GM12878 (cell line): ENCODE measurements at regions of chr18 and their contacts with region 1.

Region 1: GRCh38 chr18:35688757-35689156 is 107.2 kb downstream of the GALNT1 start:
- DNase-seq: peak; percentile 35
- ATAC-seq: peak; percentile 94
- H3K4me3 ChIP-seq: no peak overlapping the region
- H3K27ac ChIP-seq: peak overlapping the region; percentile 7
- H3K4me1 ChIP-seq: peaks cover 4% of the 10 kb centered on the region
- H3K27me3 ChIP-seq: no peaks in the 10 kb centered on the region
- CTCF ChIP-seq: no peak
- EP300 ChIP-seq: no peak
- POLR2A ChIP-seq: no peak
- RAD21 ChIP-seq: no peak

Region 2: DNA sequence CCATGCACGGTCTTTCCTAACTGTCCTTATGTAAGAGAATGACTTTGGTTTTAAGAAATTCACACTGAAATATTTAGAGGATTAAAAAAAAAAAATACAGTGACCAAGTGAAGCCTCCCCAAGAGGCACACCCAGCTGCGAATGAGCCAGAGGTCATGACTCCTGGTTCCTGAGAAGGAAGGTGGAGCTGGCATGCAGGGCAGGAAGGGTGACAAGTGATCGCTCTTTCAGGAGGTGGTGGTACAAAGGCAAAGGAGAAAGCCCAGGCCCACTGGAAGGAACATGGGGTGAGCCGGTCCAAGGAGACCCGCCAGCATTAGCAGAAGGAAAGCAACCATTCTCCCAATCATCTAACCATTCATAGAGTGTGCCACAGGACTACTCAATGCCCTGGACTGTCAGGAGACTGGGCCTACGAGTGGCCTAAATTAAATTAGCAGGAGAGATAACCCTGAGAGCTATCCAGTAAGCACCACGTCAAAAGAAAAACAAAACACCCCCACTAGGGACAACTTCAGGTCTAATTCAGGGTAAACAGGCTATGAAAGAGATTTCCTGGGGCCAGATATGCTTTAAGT is 198.8 kb before region 1 on chr18:
- CTCF ChIA-PET with region 1: no interaction called
- POLR2A ChIA-PET with region 1: no interaction called
- RAD21 ChIA-PET with region 1: no interaction called
- SMC1A ChIA-PET with region 1: no interaction called
- in situ Hi-C with region 1: no loop called
- intact Hi-C with region 1: no loop called
- DNase-seq: no peak
- ATAC-seq: no peak
- H3K4me3 ChIP-seq: no peak overlapping the region
- H3K27ac ChIP-seq: no peak overlapping the region
- H3K4me1 ChIP-seq: no peaks in the 10 kb centered on the region; the same call in 1 of the 2 replicates
- H3K27me3 ChIP-seq: no peaks in the 10 kb centered on the region
- CTCF ChIP-seq: no peak
- EP300 ChIP-seq: no peak
- POLR2A ChIP-seq: no peak
- RAD21 ChIP-seq: no peak

Region 3: DNA sequence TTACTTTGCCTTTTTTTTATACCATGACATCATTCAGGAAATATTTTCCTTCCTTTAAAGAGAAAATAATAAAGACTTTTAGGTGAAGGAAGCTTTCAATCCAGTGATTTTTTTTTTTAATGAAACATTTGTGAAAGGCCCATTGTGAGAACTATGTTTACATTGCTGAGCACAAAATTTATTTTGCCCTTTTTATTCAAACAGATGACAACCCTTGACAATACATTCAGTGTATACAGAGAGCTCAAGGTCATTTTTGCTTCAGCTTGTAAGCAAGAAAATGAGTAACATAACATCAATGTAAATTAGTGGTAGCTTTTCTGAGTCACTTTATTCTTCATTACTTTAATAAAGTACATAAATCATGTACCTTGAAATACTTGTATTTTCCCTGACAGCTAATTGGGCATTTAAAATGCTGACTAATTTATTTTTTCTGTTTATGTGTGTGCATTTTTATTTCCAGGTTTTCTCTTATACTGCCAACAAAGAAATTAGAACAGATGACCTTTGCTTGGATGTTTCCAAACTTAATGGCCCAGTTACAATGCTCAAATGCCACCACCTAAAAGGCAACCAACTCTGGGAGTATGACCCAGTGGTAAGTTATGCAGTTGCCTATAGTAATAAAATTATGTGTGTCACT is 14.4 kb after region 1 on chr18:
- CTCF ChIA-PET with region 1: interaction called, 4 read pairs
- POLR2A ChIA-PET with region 1: no interaction called
- RAD21 ChIA-PET with region 1: no interaction called
- SMC1A ChIA-PET with region 1: interaction called, 12 read pairs
- in situ Hi-C with region 1: no loop called
- intact Hi-C with region 1: no loop called
- DNase-seq: no peak
- ATAC-seq: no peak
- H3K4me3 ChIP-seq: no peak overlapping the region
- H3K27ac ChIP-seq: no peak overlapping the region
- H3K4me1 ChIP-seq: no peaks in the 10 kb centered on the region
- H3K27me3 ChIP-seq: no peaks in the 10 kb centered on the region
- CTCF ChIP-seq: no peak
- EP300 ChIP-seq: no peak
- POLR2A ChIP-seq: no peak
- RAD21 ChIP-seq: no peak